ENCODE measurements at regions of chr22 and their contacts with region 1.

Region 1: DNA sequence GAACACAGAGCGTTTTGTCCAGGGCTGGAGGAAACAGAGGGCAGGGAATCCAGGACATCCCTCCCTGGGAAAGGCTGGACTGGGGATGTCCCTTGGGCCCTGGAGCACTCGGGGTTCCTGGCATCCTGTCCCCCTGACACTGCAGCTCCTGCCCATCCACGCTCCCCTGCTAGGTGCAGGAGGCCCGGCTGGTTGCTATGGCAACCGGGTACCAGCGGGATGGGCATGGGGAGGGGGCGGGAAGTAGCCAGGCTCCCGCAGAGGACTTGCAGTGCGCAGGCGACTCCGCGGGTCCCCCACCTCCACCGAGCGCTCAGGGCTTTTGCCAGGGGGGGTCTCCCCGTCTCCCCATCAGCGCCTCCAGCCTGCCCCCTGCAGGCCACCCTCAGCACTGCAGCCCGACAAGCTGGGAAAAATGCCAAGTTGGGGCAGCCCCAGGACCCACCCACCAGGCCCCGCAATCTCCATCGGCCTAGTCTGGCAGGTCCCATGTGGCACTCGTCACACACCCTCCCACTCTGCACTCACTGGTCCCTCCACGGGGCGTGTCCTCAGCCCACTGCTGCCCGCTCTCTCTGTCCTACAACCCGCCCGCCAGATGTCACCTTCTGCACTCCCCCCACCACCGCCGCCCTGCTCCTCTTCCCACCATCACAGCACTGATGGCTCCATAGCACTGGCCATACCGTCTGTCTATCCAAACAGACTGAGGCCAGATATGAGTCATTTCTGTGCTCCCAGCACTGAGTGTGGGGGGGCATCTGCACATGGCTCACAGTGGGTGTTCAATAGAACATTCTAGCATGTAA is 31.5 kb downstream of the KIAA0930 start:
- DNase-seq: peak; percentile 64 to 98 (median 77)

Region 2: DNA sequence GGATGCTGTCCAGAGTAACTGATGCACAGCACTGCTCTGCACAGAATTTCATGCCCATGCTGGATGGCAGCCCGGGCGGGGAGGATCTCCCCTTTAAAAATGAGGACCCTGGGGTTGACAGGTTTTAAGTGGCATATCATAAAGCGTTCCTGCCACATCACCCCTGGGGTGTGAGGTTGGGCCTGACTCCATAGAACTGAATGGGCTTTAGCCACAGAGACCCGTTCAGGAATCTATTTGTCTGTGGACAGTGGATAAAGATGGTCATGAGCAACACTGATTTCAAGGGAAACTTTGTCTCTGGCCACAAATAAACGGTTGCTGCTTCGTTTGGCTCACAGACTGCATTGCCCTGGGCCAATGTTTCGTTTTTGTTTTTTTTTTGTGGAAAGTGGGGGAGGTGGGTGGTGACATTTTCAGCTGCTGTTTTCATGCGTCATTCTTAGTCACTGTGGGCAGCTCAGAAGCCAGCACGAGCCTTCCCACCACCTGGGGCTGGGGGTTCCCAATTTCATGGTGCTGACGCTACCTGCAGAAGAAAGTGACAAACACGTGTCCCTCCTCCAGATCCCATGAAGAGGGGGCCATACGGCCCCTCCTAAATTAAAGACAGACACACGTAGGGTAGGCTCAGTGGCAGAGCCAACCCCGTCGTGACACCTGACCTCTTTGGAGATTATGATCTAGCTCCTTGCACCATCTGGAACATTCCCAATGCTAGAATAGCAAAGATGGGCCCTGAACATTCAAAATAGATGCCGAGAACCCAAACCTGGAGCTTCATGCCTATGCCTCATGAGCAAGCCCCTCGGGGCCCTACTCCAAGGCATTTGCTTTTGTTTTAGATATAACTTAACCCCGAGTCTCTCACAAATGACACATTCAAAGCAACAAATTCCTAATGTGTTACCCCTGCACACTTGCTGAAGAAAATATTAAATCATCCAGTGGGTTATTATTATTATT is 144.6 kb before region 1 on chr22:
- intact Hi-C with region 1: no loop called
- DNase-seq: peak in 1 of 10 donors; percentile 42

Region 3: DNA sequence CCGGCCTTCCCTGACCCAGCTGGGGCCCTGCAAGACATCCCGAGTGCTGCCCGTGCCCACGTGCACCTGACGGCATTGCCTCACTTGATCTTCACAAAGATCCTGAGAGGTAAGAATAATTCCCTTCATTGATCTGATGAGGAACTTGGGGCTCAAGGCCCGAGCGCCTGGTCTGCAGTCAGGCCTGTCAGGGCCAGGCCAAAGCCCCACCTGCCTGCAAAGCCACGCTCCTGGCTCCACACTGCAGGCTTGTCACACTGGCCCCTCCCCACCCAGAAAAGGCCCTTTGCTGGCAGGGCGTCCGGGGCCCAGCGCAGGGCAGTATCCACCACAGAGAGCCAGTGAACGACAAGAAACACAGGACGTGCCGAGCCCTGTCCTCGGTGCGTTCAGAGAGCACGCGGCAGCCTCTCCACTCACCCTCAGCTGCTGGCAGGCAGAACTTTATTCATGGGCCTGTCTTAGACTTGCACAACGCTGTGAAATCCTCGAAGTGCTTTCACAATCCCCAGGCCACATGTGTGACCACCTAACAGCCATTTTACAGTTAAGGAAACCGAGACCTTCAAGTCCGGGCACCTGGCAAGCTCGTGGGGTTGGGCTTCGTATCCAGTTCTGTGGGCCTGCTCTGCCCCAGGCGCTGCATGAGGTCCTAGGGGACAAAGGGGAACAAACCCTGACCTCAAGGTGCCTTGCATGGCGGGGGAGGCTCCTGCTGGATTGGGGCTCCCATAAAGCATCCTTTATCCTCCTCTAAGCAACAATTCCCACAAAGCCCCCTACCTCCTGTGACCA is 16.7 kb after region 1 on chr22:
- intact Hi-C with region 1: loop called (anchors 1 kb)
- DNase-seq: peak in 6 of 10 donors; percentile 58 to 92 (median 74)

Region 4: DNA sequence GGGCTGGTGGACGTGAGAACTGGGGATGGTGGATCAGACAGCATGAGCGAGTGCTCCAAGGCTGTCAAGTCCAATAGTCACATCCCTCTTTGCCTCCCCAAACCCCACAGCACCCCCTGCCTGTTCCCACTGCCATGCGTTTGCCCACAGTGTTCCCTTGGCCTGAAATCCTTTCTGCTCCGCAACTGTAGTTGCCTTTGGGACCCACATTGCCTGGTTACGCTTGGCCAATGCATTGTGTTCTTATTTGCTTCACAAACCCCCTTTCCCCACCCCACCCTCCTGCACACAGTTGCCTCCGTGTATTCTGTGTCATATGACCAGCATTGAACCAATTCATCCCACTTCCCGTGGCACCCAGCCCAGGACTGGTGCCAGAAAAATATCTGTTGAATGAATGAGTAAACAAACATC is 33.6 kb after region 1 on chr22:
- intact Hi-C with region 1: loop called (anchors 2 kb)
- DNase-seq: peak in 6 of 10 donors; percentile 39 to 95 (median 65)